Activated T-helper 1 cell treated with anti-CD3 and anti-CD28 coated beads, Interleukin-12 subunit alpha, Interleukin-12 subunit beta, Interleukin-2, Interleukin-4 antibody, amounts not matched to agents 30 ng/mL and 10 ng/mL and 1 ng/mL, durations not matched to agents 14 hours and 24 hours and 36 hours (primary cell): ENCODE measurements at regions of chr22 and their contacts with region 1.

Region 1: DNA sequence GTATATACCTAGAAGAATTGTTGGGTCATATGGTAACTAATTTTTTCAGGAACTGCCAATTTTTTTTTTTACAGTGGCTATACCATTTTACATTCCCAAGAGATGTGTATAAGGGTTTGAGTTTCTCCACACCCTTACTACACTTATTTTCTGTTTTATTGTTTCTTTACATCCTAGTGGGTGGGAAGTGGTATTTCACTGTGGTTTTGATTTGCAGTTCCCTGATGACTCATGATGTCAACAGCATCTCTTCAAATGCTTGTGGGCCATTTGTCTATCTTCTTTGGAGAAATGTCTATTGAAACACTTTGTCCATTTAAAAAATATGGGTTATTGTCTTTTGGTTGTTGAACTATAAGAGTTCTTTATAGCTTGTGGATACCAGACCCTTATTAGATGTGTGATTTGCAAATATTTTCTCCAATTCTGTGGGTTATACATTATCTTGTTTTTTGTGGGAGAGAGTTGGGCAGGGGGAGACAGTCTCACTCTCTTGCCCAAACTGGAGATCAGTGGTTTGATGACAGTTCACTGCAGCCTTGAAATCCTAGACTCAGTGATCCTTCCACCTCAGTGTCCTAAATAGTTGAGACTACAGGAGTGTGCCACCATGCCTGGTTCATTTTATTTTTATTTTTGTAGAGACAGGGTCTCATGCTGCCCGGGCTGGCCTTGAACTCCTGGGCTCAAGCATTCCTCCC is 30.3 kb upstream of the PISD start:
- DNase-seq: peak; percentile 11
- H3K4me3 Mint-ChIP-seq: peak overlapping the region; percentile 53
- H3K27ac Mint-ChIP-seq: peak overlapping the region; percentile 87
- H3K4me1 Mint-ChIP-seq: peaks cover 31% of the 10 kb centered on the region
- H3K27me3 Mint-ChIP-seq: no peaks in the 10 kb centered on the region

Region 2: DNA sequence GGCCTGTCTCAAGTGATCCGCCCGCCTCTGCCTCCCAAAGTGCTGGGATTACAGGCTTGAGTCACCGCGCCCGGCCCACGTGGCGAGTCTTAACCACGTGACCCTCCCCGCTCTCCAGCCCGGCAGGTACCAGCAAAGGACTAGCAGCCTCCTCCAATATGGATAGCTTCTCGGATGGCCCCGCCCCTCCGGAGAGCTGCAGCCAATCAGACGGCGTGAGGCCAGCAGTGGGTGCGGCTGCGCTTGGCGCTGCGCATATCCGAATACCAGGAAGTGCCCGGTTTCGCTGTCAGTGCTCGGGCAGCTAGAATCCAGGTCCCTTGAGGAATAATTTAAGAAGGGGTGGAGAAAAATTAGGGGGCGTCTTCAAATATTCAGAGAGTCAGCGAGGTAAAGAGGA is 15.6 kb before region 1 on chr22:
- intact Hi-C with region 1: loop called (anchors 1 kb)
- DNase-seq: peak; percentile 91
- H3K4me3 Mint-ChIP-seq: peak overlapping the region; percentile 95
- H3K27ac Mint-ChIP-seq: peak overlapping the region; percentile 92
- H3K4me1 Mint-ChIP-seq: peaks cover 12% of the 10 kb centered on the region
- H3K27me3 Mint-ChIP-seq: no peaks in the 10 kb centered on the region

Region 3: GRCh38 chr22:31829505-31829904 is 137.2 kb after region 1 on chr22:
- intact Hi-C with region 1: loop called (anchors 2 kb)
- DNase-seq: peak; percentile 7
- H3K4me3 Mint-ChIP-seq: peak overlapping the region; percentile 72
- H3K27ac Mint-ChIP-seq: peak overlapping the region; percentile 95
- H3K4me1 Mint-ChIP-seq: peaks cover 30% of the 10 kb centered on the region
- H3K27me3 Mint-ChIP-seq: no peaks in the 10 kb centered on the region

Region 4: DNA sequence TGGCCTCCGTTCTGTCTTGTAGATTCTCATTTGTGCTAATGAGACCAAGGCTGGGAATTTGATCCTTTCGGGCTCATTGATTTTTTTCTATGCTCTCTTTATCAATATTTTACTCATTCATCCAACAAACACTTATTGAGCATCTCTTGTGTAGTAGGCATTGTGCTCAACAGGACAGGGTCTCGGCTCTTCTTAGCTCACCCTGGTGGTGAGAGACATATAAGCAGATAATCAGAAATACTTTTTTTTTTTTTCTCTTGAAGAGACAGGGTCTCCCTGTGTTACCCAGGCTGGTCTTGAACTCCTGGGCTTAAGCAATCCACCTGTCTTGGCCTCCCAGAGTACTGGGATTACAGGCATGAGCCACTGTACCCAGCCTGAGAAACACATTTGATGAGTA is 302.7 kb after region 1 on chr22:
- intact Hi-C with region 1: no loop called
- DNase-seq: no peak
- H3K4me3 Mint-ChIP-seq: no peak overlapping the region
- H3K27ac Mint-ChIP-seq: no peak overlapping the region
- H3K4me1 Mint-ChIP-seq: no peaks in the 10 kb centered on the region
- H3K27me3 Mint-ChIP-seq: peaks cover 11% of the 10 kb centered on the region